ENCODE measurements at regions of chr11 and their contacts with region 1.

Region 1: DNA sequence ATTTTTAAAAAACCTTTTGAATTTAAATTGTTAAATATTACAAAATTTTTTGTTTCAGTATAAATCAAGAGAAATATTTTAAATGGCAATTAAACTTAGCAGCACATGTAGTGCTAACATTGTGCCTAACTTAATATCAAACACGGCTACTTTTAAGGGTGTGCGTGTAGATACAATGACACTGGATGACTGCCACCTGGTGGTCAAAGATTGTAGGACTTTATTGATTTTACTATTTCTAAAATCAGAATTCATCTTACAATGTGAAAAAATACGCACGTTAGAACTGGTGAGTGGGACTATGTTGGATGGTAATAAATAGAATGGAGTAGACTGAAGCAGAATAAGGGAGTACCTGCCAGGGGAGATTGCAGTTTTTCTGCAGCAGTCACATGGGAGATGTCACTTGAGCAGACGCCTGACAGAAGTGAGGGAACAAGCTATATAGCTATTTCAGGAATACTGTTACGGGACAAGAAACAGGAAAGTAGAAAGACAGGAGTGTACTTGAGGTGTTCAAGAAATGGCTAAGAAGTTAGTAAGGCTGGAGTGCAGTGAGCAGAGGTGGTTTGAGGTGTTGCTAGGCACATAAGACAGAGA is 52.9 kb downstream of the UVRAG start:
- DNase-seq: peak; percentile 46
- CTCF ChIP-seq: peak; percentile 60

Region 2: GRCh38 chr11:75802913-75803820 is 64.7 kb before region 1 on chr11:
- in situ Hi-C with region 1: loop called (anchors 10 kb)
- DNase-seq: peak; percentile 79
- CTCF ChIP-seq: peak; percentile 94